ENCODE measurements at regions of chr6 and their contacts with region 1.

Region 1: GRCh38 chr6:130843575-130844320 is 16.5 kb downstream of the SMLR1 start:
- DNase-seq: no peak
- H3K4me3 Mint-ChIP-seq: no peak overlapping the region
- H3K27ac Mint-ChIP-seq: no peak overlapping the region
- H3K4me1 Mint-ChIP-seq: peaks cover 8% of the 10 kb centered on the region
- H3K27me3 Mint-ChIP-seq: no peaks in the 10 kb centered on the region

Region 2: GRCh38 chr6:130047088-130047995 is 796.4 kb before region 1 on chr6:
- intact Hi-C with region 1: loop called (anchors 5 kb)
- DNase-seq: no peak
- H3K4me3 Mint-ChIP-seq: no peak overlapping the region
- H3K27ac Mint-ChIP-seq: no peak overlapping the region
- H3K4me1 Mint-ChIP-seq: peaks cover 7% of the 10 kb centered on the region
- H3K27me3 Mint-ChIP-seq: no peaks in the 10 kb centered on the region

Region 3: DNA sequence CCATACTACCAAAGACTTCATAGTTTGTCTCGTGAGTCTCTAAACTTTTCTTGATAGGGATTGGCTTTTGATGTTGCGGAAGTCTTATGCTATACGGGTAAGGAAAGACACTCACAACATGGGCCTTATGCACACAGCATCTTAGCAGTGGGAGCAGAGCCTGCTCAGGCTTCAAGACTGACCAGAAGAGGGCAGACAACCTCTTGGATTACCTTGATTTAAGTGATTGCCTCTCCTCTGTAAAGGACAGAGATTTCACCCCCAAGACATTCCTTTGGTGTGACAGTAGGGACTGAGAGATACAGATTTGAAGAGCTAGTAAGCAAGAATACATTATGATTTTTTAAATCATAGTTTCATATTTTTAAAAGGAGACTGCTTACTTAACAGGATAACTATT is 549.9 kb before region 1 on chr6:
- intact Hi-C with region 1: loop called (anchors 1 kb)
- DNase-seq: no peak
- H3K4me3 Mint-ChIP-seq: no peak overlapping the region
- H3K27ac Mint-ChIP-seq: no peak overlapping the region
- H3K4me1 Mint-ChIP-seq: no peaks in the 10 kb centered on the region
- H3K27me3 Mint-ChIP-seq: peaks cover 4% of the 10 kb centered on the region

Region 4: DNA sequence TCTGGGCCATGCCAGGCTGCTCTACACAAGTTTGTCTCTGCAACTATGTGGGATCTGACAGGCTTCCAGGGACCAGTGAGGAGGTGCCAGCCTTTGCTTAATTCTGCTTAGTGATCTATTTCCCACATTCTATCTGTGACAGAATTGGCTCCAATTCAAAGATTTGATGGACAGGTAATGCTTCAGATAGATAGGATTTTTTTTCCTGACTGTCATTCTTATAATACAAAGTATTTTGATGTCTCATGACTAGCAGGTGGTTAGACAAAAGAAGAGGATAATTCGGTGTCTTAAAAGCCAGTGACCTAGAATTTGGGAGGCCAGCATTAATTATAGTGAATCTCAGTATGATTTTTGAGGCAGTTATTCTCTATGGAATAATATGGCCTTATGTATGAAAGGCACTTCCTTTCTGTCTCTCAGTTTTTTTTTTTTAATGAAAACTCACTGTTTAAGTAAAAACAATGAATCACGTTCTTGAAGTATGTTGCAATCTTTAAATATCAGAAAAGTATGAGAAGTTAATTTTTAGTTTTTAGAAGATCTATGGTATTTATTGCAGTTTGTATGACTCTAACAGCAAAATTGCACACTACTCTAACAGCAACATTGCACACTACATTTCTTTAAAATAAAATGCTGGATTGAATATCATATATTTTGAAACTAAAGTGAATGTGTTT is 434.2 kb before region 1 on chr6:
- intact Hi-C with region 1: no loop called
- DNase-seq: no peak
- H3K4me3 Mint-ChIP-seq: no peak overlapping the region
- H3K27ac Mint-ChIP-seq: no peak overlapping the region
- H3K4me1 Mint-ChIP-seq: no peaks in the 10 kb centered on the region
- H3K27me3 Mint-ChIP-seq: peaks cover 12% of the 10 kb centered on the region

Region 5: DNA sequence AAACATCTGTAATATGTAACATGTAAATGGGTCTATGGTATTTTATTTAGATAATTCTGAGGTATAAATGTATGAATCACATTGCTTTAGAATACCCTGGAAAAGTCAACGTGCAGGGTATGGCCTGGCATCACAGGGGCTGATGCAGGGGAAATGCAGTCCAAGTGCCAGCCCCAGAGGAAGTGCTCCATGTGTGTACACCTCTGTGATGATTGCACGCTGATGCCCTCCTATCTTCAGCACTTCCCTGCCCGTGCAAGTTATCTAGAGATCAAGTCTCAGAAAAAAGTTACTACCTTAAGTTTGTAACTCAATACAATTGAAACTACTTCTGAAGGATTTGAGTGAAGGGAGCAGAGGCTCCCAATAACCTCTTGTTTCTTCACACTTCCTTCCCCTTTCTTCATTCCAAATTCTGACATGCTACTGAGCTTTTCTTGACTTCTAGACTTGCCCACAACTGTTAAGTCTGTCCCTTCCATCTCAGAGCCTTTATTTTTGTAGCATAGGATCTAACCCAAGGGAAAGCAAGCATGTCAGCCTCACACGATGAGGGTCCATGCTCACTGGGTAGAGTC is 14.3 kb before region 1 on chr6:
- intact Hi-C with region 1: no loop called
- DNase-seq: no peak
- H3K4me3 Mint-ChIP-seq: no peak overlapping the region
- H3K27ac Mint-ChIP-seq: no peak overlapping the region
- H3K4me1 Mint-ChIP-seq: peaks cover 9% of the 10 kb centered on the region
- H3K27me3 Mint-ChIP-seq: no peaks in the 10 kb centered on the region